ENCODE measurements at regions of chr21 and their contacts with region 1.

Region 1: GRCh38 chr21:41706678-41707077 is 60.2 kb downstream of the RIPK4 start:
- DNase-seq: no peak
- H3K4me3 ChIP-seq: no peak overlapping the region
- H3K27ac ChIP-seq: no peak overlapping the region
- H3K4me1 ChIP-seq: no peaks in the 10 kb centered on the region
- H3K27me3 ChIP-seq: no peaks in the 10 kb centered on the region
- CTCF ChIP-seq: no peak
- EP300 ChIP-seq: no peak
- POLR2A ChIP-seq: no peak

Region 2: GRCh38 chr21:41752231-41752681 is 45.6 kb after region 1 on chr21:
- intact Hi-C with region 1: loop called in 1 of 4 experiments (anchors 10 kb)
- DNase-seq: no peak
- H3K4me3 ChIP-seq: no peak overlapping the region
- H3K27ac ChIP-seq: no peak overlapping the region
- H3K4me1 ChIP-seq: no peaks in the 10 kb centered on the region
- H3K27me3 ChIP-seq: no peaks in the 10 kb centered on the region
- CTCF ChIP-seq: no peak
- EP300 ChIP-seq: no peak
- POLR2A ChIP-seq: no peak

Region 3: GRCh38 chr21:41835711-41836154 is 129.1 kb after region 1 on chr21:
- intact Hi-C with region 1: loop called in 1 of 4 experiments (anchors 5 kb)
- DNase-seq: peak in 1 of 5 donors; percentile 44
- H3K4me3 ChIP-seq: no peak overlapping the region
- H3K27ac ChIP-seq: peak overlapping the region in 1 of 2 donors; percentile 74
- H3K4me1 ChIP-seq: no peaks in the 10 kb centered on the region
- H3K27me3 ChIP-seq: no peaks in the 10 kb centered on the region
- CTCF ChIP-seq: no peak
- EP300 ChIP-seq: no peak
- POLR2A ChIP-seq: no peak

Region 4: DNA sequence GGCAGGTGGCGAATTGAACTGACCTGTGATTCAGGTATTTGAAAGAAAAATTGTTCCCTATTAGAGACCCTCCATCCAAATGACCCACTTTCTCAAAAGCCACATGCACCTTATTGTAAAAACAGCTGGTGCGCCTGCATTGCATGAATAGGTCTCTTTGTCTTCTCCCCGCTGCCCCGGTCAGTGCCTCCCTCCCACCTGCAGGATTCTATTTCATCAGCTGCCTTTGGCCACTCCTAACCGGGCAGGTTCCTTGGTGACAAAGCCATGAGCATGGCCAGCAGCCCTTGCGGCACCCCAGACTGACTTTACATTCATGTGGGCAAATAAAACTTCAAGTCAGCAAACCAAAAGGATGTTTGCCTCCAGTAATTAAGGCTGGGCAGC is 682.8 kb after region 1 on chr21:
- intact Hi-C with region 1: no loop called
- DNase-seq: no peak
- H3K4me3 ChIP-seq: no peak overlapping the region
- H3K27ac ChIP-seq: no peak overlapping the region
- H3K4me1 ChIP-seq: no peaks in the 10 kb centered on the region
- H3K27me3 ChIP-seq: no peaks in the 10 kb centered on the region
- CTCF ChIP-seq: no peak
- EP300 ChIP-seq: no peak
- POLR2A ChIP-seq: no peak

Region 5: DNA sequence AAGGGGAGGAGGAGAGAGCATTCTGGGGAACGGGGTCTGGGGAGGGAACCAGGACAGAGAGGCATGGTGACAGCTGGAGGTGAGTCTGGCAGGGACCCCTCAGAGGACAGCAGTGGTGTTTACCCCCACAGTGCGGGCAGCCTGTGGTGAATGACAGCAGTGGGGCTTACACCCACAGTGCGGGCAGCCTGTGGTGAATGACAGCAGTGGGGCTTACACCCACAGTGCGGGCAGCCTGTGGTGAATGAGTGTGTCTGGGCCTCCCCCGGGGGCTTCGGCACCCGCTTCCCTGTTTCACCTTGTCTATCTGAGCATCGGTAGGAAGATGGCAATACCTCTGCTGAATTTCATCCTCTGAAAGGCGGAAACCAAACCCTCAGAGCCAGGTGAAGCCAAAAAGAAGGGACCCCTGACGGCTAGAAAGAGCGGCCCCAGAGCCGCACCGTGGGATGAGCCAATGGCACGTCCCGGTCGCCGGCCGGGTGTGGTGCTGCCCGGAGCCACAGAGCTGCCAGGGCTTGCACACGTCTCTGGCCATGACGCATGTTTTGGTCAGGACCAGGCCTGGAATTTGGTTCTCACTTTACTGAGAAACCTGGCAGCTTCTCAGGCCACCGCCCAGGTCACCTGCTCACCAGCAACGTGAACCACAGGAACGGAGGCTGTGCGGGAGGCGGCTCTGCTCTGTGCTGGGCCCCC is 1666.1 kb after region 1 on chr21:
- intact Hi-C with region 1: no loop called
- DNase-seq: peak in 1 of 5 donors; percentile 14
- H3K4me3 ChIP-seq: no peak overlapping the region
- H3K27ac ChIP-seq: no peak overlapping the region
- H3K4me1 ChIP-seq: no peaks in the 10 kb centered on the region
- H3K27me3 ChIP-seq: no peaks in the 10 kb centered on the region
- CTCF ChIP-seq: no peak
- EP300 ChIP-seq: no peak
- POLR2A ChIP-seq: no peak